ENCODE measurements at regions of chr1 and their contacts with region 1.

Region 1: GRCh38 chr1:99180343-99180808 is 83.9 kb upstream of the PLPPR4 start:
- DNase-seq: peak; percentile 17 to 95 (median 81)

Region 2: DNA sequence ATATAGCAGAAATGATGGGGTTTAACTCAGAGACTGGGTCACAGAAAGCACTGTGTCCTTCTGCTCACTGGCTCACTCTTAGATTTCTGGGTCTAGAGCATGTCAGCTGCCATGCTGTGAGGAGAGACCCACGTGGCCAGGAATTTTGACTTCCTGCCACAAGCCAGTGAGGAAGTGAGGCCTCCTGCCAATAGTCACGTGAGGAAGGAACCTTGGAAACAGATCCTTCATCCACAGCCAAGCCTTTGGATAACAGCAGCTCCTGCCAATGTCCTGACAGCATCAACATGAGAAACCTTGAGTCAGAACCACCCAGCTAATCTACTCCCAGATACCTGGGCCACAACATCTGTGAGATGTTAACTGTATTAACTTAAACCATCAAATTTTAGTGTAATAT is 61.2 kb before region 1 on chr1:
- intact Hi-C with region 1: no loop called
- DNase-seq: peak in 5 of 42 donors; percentile 6 to 41 (median 8)

Region 3: GRCh38 chr1:99707535-99708142 is 527.3 kb after region 1 on chr1:
- intact Hi-C with region 1: loop called (anchors 10 kb)
- DNase-seq: peak; percentile 33 to 92 (median 80)

Measured in head of caudate nucleus (tissue), 42 donors.